ENCODE measurements at regions of chr1 and their contacts with region 1.

Region 1: GRCh38 chr1:150696590-150697524 is at the start of gene GOLPH3L:
- DNase-seq: peak; percentile 71 to 95 (median 90)
- ATAC-seq: peak; percentile 99 to 100 (median 100)
- H3K4me3 ChIP-seq: peak within 1 kb of the TSS; percentile 93 to 96
- H3K4me3 Mint-ChIP-seq: peak within 1 kb of the TSS; percentile 94 to 99 (median 97)
- H3K27ac ChIP-seq: peak within 1 kb of the TSS; percentile 77
- H3K27ac Mint-ChIP-seq: peak within 1 kb of the TSS; percentile 94 to 95
- H3K4me1 ChIP-seq: peaks cover 4 to 13% of the 10 kb centered on the region in 2 experiments
- H3K4me1 Mint-ChIP-seq: peaks cover 29 to 36% (median 31%) of the 10 kb centered on the region in 3 donors
- H3K27me3 ChIP-seq: no peaks in the 10 kb centered on the region
- H3K27me3 Mint-ChIP-seq: no peaks in the 10 kb centered on the region
- total RNA-seq, gene GOLPH3L: 10.2 to 23.7 (median 21.5) TPM

Region 2: GRCh38 chr1:150572918-150573647 is 123.8 kb before region 1 on chr1:
- CTCF ChIA-PET with region 1: no interaction called
- POLR2A ChIA-PET with region 1: interaction called in 1 of 2 experiments, 11 read pairs
- DNase-seq: peak in 1 of 35 experiments; percentile 35
- ATAC-seq: peak in 1 of 4 experiments; percentile 3
- H3K4me3 ChIP-seq: peak overlapping the region; percentile 40 to 77
- H3K4me3 Mint-ChIP-seq: peak overlapping the region; percentile 95 to 100 (median 99)
- H3K27ac ChIP-seq: peak overlapping the region; percentile 84
- H3K27ac Mint-ChIP-seq: peak overlapping the region; percentile 98 to 99
- H3K4me1 ChIP-seq: peaks cover 61 to 72% of the 10 kb centered on the region in 2 experiments
- H3K4me1 Mint-ChIP-seq: peaks cover 71 to 77% (median 74%) of the 10 kb centered on the region in 3 donors
- H3K27me3 ChIP-seq: no peaks in the 10 kb centered on the region
- H3K27me3 Mint-ChIP-seq: no peaks in the 10 kb centered on the region

Measured in T-cell (primary cell).